GM18951 (cell line): ENCODE measurements at regions of chr12 and their contacts with region 1.

Region 1: GRCh38 chr12:55940065-55940732 is 9.2 kb downstream of the DGKA start:
- POLR2A ChIP-seq: no peak

Region 2: GRCh38 chr12:55548756-55549155 is 391.4 kb before region 1 on chr12:
- in situ Hi-C with region 1: no loop called
- POLR2A ChIP-seq: no peak

Region 3: GRCh38 chr12:55743116-55743921 is 196.9 kb before region 1 on chr12 and contains the start of gene GDF11:
- in situ Hi-C with region 1: loop called (anchors 10 kb)
- POLR2A ChIP-seq: peak; percentile 40

Region 4: DNA sequence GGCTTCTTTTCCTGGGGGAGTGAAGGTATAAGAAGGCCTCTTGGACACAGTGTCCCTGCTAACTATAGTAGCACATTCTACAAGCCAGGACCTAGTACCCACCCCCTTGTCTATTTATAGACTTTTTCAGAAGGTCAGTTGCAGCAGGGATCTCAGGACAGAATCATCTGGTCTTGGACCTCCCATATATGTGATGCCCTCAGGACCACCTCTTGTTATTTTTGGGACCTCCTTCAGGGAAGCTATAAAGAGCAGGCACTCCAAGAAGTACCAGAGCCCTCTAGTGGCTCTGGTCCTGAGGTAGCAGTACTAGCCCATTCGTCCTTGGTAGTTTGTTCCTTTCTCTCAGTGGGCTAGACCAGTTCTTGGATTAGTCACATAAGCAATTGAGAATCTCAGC is 330.8 kb after region 1 on chr12:
- in situ Hi-C with region 1: no loop called
- POLR2A ChIP-seq: no peak